ENCODE measurements at regions of chr1 and their contacts with region 1.

Region 1: DNA sequence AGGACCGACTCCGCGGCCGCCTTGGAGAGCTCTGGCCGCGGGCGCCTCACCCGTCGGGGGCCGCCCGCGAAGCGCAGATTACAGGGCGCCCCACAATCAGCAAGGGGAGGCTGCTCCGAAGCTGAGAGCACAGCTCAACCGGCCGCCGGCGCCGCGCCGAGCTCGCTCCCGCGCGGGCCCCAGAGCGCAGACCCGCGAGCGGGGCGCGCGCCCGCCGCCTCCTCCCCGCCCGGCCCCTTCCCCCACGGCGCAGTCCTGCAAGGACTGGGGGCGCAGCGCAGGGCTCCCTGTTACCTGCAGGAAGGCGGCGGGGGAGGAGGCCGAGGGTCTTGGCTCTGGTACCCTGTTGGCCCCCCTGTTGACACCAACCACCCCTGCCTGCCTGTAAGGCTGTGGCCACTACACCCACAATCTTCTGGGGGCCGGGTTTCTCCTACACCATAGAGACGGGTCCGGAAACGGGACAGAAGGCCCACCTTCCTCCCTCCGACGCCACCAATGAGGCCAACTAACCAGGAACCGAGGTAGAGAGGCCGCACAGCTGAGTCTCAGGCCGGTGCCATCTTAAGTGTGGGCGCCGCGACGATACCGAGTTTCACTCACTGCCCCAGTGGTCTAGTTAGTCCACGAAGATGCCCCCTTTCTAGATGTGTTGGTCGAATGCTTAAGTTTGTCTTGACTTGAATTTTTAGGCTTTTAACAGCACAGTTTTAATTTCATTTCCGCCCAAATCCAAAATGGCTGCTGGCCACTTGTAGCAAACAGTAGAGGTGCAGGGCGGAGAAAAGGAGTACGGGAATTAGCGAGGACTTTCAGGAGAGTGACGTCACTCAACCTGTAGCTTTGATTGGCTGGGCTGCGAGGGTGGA is at the start of gene SCYL3:
- DNase-seq: peak; percentile 91 to 99 (median 95)

Region 2: GRCh38 chr1:169794530-169795416 is 99.0 kb before region 1 on chr1 and contains the start of gene METTL18:
- intact Hi-C with region 1: loop called (anchors 2 kb)
- DNase-seq: peak; percentile 89 to 99 (median 93)

Region 3: GRCh38 chr1:170074250-170075157 is 180.8 kb after region 1 on chr1 and contains the start of gene KIFAP3:
- intact Hi-C with region 1: loop called (anchors 1 kb)
- DNase-seq: peak; percentile 90 to 99 (median 94)

Measured in posterior cingulate gyrus (tissue), 11 donors.